ENCODE measurements at regions of chr22 and their contacts with region 1.

Region 1: DNA sequence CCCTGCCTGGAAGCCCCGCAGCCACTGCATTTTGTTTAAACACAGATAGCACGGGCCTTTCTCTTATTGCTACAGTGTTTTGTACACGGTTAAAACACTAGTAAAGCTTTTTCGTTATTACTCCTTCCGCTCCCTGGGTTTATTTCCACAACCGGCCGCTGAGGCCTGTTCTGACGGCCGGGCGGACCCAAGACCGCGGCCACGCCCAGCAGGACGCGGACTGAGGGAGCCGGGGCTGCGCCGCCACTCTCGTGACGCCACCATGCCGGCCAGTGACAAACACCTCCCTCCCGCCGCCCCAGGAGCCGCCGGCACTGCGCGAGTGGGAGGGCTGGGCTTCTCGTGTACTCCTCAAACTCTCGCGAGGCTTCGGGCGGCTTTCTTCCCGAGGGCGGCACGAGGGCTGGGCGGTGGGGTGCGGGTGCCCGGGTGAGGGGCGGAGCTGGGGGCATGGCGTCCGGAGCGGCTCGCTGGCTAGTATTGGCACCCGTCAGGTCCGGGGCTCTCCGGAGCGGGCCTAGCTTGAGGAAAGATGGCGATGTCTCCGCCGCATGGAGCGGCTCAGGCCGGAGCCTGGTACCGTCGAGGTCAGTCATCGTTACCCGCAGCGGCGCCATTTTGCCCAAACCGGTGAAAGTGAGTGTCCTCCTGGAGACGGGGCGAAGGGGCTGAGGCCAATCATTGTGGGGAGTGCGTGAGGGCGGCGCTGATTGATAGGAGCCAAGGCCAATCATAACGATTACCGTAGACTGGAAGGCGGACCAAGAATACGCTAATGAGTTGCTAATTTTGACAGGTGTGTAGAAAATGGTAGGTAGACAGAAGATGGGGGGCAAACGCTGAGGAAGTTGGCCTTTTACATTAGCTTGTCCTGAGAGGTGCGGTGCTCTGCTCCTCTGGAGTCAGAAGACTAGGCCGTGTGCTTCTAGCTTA is at the start of gene SMDT1:
- DNase-seq: peak; percentile 95 to 100 (median 98)
- ATAC-seq: peak; percentile 91 to 93 (median 92)
- H3K4me3 ChIP-seq: peak within 1 kb of the TSS; percentile 80 to 82
- H3K4me3 Mint-ChIP-seq: peak within 1 kb of the TSS; percentile 94 to 96 (median 95)
- H3K27ac ChIP-seq: peak within 1 kb of the TSS; percentile 98
- H3K27ac Mint-ChIP-seq: peak within 1 kb of the TSS; percentile 93 to 98
- H3K4me1 ChIP-seq: peaks cover 15 to 43% of the 10 kb centered on the region in 2 experiments
- H3K4me1 Mint-ChIP-seq: peaks cover 38 to 52% (median 45%) of the 10 kb centered on the region in 3 donors
- H3K27me3 ChIP-seq: no peaks in the 10 kb centered on the region
- H3K27me3 Mint-ChIP-seq: no peaks in the 10 kb centered on the region
- total RNA-seq, gene SMDT1: 101 to 176 (median 114) TPM

Region 2: GRCh38 chr22:42090596-42091454 is 11.2 kb after region 1 on chr22 and contains the start of gene NDUFA6:
- CTCF ChIA-PET with region 1: interaction called in 1 of 2 experiments, 16 read pairs
- POLR2A ChIA-PET with region 1: interaction called, 4 to 36 read pairs
- DNase-seq: peak; percentile 93 to 99 (median 98)
- ATAC-seq: peak; percentile 88 to 92 (median 88)
- H3K4me3 ChIP-seq: peak within 1 kb of the TSS; percentile 70 to 90
- H3K4me3 Mint-ChIP-seq: peak within 1 kb of the TSS; percentile 97 to 99 (median 97)
- H3K27ac ChIP-seq: peak within 1 kb of the TSS; percentile 100
- H3K27ac Mint-ChIP-seq: peak within 1 kb of the TSS; percentile 98 to 99
- H3K4me1 ChIP-seq: peaks cover 10 to 28% of the 10 kb centered on the region in 2 experiments
- H3K4me1 Mint-ChIP-seq: peaks cover 36 to 49% (median 39%) of the 10 kb centered on the region in 3 donors
- H3K27me3 ChIP-seq: no peaks in the 10 kb centered on the region
- H3K27me3 Mint-ChIP-seq: no peaks in the 10 kb centered on the region
- total RNA-seq, gene NDUFA6: 36.6 to 52.3 (median 39.6) TPM

Measured in T-cell (primary cell).